HEK293 (cell line): ENCODE measurements at regions of chr16 and their contacts with region 1.

Region 1: DNA sequence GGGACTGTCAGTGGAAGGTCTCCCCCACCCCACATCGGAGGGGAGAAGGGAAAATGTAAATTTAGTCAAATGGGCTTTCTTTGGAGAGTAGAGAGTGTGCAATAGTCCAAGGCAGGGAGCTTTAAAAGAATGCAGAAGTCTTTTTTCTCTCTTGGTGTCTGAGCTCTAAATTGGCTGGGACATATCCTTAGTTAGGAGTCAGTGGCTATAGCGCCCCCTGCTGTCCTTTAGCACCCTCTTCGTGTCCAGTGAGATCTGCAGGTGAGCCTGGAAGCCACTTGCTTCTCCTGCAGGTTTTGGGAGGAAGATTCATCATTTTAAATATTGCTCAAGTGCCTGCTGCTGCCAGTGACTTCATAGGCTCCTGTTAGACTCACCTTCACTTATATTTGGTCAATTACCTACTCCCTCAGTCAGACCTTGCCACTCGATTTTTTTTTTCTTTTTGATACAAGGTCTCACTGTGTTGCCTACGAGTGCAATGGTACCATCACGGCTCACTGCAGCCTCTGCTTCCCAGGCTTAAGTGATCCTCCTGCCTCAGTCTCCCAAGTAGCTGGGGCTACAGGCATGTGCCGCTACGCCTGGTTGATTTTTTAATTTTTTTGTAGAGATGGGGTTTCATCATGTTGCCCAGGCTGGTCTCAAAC is 174.8 kb downstream of the PRKCB start:
- H3K4me3 ChIP-seq: no peak overlapping the region
- H3K27ac ChIP-seq: no peak overlapping the region
- H3K4me1 ChIP-seq: no peaks in the 10 kb centered on the region; the same call in 1 of the 2 replicates
- CTCF ChIP-seq: peak; percentile 43; the same call in 1 of the 2 replicates

Region 2: DNA sequence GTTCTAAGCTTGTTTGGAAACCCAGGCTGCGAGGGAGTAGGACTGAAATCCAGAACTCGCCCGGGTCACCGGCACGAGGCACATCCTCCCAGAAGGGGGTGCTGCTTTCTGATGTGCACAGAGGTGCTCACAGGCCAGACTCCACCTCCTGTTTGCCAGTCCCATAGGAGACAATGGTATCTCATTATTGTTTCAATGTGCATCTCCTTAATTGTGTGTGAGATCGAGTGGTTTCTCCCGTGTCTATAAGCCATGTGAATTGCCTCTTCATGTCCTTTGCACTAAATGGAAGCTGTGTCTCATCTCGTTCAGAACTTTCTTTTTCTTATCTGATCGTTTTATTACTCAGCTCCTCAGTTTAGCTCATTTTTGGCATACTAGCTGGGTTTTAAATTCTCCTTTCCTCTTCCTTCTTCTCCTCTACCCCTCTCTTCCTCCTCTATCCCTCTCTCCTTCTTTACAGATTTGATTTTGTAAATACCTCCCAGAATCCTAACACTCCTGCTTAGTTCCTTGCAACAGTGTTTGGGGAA is 206.9 kb before region 1 on chr16:
- CTCF ChIA-PET with region 1: interaction called, 58 read pairs
- POLR2A ChIA-PET with region 1: no interaction called
- H3K4me3 ChIP-seq: no peak overlapping the region
- H3K27ac ChIP-seq: no peak overlapping the region
- H3K4me1 ChIP-seq: no peaks in the 10 kb centered on the region
- CTCF ChIP-seq: peak; percentile 76

Region 3: DNA sequence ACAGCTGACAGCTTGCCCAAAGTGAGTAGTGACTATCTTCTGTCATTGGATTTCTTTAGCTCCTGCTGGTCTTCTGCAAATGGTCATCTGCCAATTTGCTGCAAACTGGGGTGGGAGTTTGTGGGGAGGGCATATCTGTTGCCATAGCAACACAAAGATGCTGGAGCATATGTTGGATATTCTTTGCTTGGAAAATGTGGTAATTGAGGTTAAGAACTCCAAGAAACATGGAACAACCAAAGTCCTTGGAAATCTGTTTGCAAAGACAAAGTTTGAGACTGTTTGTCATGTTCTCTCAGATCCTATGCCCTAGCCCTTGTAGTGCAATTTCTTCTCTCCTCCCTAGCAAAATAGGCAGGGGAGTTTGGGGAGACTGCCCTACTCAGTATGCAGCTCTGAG is 19.5 kb before region 1 on chr16:
- CTCF ChIA-PET with region 1: interaction called, 12 read pairs
- POLR2A ChIA-PET with region 1: no interaction called
- H3K4me3 ChIP-seq: no peak overlapping the region
- H3K27ac ChIP-seq: no peak overlapping the region
- H3K4me1 ChIP-seq: no peaks in the 10 kb centered on the region
- CTCF ChIP-seq: no peak

Region 4: DNA sequence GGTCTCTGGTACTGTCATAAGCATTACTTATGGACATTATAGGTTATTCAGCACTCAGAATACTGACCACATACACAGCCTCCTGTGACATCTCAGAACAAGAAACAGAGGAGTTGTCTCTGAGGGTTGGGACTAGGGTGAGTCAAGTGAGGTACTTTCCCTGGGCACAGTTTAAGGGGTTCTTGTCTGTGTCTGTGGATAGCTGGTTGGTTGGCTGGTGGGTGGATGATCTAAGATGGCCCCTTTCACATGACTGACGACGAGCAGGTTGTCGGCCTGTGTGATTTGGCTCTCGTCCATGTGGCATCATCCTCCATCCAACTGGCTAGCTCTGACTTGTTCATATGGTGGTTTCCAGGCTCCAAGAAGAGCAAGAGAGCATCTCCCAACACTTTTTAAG is 10.9 kb before region 1 on chr16:
- CTCF ChIA-PET with region 1: interaction called, 47 read pairs
- POLR2A ChIA-PET with region 1: no interaction called
- H3K4me3 ChIP-seq: no peak overlapping the region
- H3K27ac ChIP-seq: no peak overlapping the region
- H3K4me1 ChIP-seq: no peaks in the 10 kb centered on the region
- CTCF ChIP-seq: no peak